T-cell (primary cell): ENCODE measurements at regions of chr7 and their contacts with region 1.

Region 1: GRCh38 chr7:138388673-138389491 is 71.2 kb upstream of the TRIM24 start:
- DNase-seq: no peak
- ATAC-seq: no peak
- H3K4me3 ChIP-seq: no peak overlapping the region
- H3K4me3 Mint-ChIP-seq: no peak overlapping the region
- H3K27ac ChIP-seq: no peak overlapping the region
- H3K27ac Mint-ChIP-seq: no peak overlapping the region
- H3K4me1 ChIP-seq: no peaks in the 10 kb centered on the region
- H3K4me1 Mint-ChIP-seq: no peaks in the 10 kb centered on the region
- H3K27me3 ChIP-seq: no peaks in the 10 kb centered on the region
- H3K27me3 Mint-ChIP-seq: no peaks in the 10 kb centered on the region

Region 2: DNA sequence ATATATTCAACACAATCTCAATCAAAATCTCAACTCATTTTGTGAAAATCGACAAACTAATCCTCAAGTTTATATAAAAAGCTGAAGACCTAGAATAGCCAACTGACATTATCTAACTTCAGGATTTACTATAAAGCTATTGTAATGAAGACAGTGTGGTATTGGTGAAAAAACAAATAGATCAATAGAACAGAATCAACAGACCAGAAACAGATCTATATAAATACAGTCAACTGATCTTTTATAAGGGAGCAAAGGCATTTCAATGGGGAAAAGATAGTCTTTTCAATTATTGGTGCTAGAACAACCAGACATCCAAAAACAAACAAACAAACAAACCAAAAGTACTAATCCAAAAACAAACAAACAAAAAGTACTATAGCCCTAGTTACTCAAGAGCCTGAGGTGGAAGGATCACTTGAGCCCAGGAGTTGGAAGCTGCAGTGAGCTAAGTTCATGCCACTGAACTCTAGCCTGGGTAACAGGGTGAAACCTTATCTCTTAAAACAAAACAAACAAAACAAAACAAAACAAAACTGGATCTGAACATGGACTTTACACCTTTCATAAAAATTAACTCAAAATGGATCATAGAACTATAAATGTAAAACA is 339.3 kb before region 1 on chr7:
- CTCF ChIA-PET with region 1: no interaction called
- POLR2A ChIA-PET with region 1: no interaction called
- DNase-seq: no peak
- ATAC-seq: no peak
- H3K4me3 ChIP-seq: no peak overlapping the region
- H3K4me3 Mint-ChIP-seq: no peak overlapping the region
- H3K27ac ChIP-seq: no peak overlapping the region
- H3K27ac Mint-ChIP-seq: no peak overlapping the region
- H3K4me1 ChIP-seq: no peaks in the 10 kb centered on the region
- H3K4me1 Mint-ChIP-seq: no peaks in the 10 kb centered on the region
- H3K27me3 ChIP-seq: peaks cover 0 to 2% of the 10 kb centered on the region in 2 experiments
- H3K27me3 Mint-ChIP-seq: peaks cover 12 to 13% of the 10 kb centered on the region in 2 donors

Region 3: GRCh38 chr7:138184191-138184590 is 204.7 kb before region 1 on chr7:
- CTCF ChIA-PET with region 1: no interaction called
- POLR2A ChIA-PET with region 1: no interaction called
- DNase-seq: no peak
- ATAC-seq: no peak
- H3K4me3 ChIP-seq: no peak overlapping the region
- H3K4me3 Mint-ChIP-seq: no peak overlapping the region
- H3K27ac ChIP-seq: no peak overlapping the region
- H3K27ac Mint-ChIP-seq: no peak overlapping the region
- H3K4me1 ChIP-seq: no peaks in the 10 kb centered on the region
- H3K4me1 Mint-ChIP-seq: no peaks in the 10 kb centered on the region
- H3K27me3 ChIP-seq: peaks cover 0 to 2% of the 10 kb centered on the region in 2 experiments
- H3K27me3 Mint-ChIP-seq: peaks cover 0 to 3% of the 10 kb centered on the region in 2 donors

Region 4: GRCh38 chr7:138195151-138195585 is 193.7 kb before region 1 on chr7:
- CTCF ChIA-PET with region 1: no interaction called
- POLR2A ChIA-PET with region 1: interaction called in 1 of 2 experiments, 10 read pairs
- DNase-seq: no peak
- ATAC-seq: no peak
- H3K4me3 ChIP-seq: no peak overlapping the region
- H3K4me3 Mint-ChIP-seq: no peak overlapping the region
- H3K27ac ChIP-seq: no peak overlapping the region
- H3K27ac Mint-ChIP-seq: no peak overlapping the region
- H3K4me1 ChIP-seq: no peaks in the 10 kb centered on the region
- H3K4me1 Mint-ChIP-seq: no peaks in the 10 kb centered on the region
- H3K27me3 ChIP-seq: peaks cover 0 to 6% of the 10 kb centered on the region in 2 experiments
- H3K27me3 Mint-ChIP-seq: peaks cover 7 to 10% of the 10 kb centered on the region in 2 donors

Region 5: GRCh38 chr7:138243430-138243829 is 145.5 kb before region 1 on chr7:
- CTCF ChIA-PET with region 1: no interaction called
- POLR2A ChIA-PET with region 1: no interaction called
- DNase-seq: no peak
- ATAC-seq: no peak
- H3K4me3 ChIP-seq: no peak overlapping the region
- H3K4me3 Mint-ChIP-seq: no peak overlapping the region
- H3K27ac ChIP-seq: no peak overlapping the region
- H3K27ac Mint-ChIP-seq: no peak overlapping the region
- H3K4me1 ChIP-seq: no peaks in the 10 kb centered on the region
- H3K4me1 Mint-ChIP-seq: no peaks in the 10 kb centered on the region
- H3K27me3 ChIP-seq: peaks cover 0 to 4% of the 10 kb centered on the region in 2 experiments
- H3K27me3 Mint-ChIP-seq: peaks cover 0 to 6% of the 10 kb centered on the region in 2 donors